Ascending aorta (tissue), 2 donors: ENCODE measurements at regions of chr11 and their contacts with region 1.

Region 1: DNA sequence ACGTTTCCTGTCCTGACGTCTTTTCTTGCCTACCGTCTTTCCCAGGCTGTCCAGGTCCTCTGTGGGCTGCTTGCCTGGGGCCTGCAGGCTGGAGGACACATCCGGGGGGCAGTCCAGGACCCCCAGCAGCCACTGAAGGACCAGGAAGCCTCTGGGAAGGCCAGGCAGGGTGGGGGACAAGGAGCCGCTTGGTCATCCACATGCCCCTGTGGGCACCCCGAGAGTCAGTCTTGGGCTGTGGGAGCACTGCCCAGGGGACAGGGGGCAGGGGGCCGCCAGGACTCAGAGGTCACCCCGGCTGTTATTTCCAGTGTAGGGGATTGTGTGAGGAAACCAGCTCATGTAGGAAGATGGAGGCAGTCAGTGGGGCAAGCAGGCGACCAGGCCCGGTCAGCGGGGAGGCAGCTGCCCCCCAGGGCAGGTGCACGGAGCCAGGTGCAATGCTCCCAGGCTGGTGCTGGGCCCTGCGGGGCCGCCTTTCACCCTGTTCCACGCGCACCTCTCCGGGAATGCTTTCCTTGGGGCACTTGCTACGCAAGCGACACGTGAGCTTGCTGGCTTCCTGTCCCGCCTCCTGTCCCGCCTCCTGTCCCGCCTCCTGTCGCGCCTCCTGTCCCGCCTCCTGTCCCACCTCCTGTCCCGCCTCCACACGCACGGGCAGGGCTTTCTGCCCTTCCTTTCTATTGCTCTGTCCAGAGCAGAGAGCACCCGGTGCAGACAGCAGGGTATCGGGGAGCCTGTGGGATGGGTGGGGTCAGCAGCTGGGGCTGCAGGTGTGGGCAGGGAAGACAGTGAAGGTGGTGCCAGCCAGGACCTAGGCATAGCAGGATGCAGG is 39.5 kb downstream of the MUC5B start:
- DNase-seq: peak; percentile 67 to 94
- H3K4me3 ChIP-seq: peak overlapping the region; percentile 44 to 67
- H3K27ac ChIP-seq: peak overlapping the region; percentile 62 to 83
- H3K4me1 ChIP-seq: peaks cover 6 to 12% of the 10 kb centered on the region in 2 donors
- H3K27me3 ChIP-seq: no peaks in the 10 kb centered on the region
- CTCF ChIP-seq: no peak

Region 2: GRCh38 chr11:1138093-1138492 is 124.3 kb before region 1 on chr11:
- intact Hi-C with region 1: no loop called
- DNase-seq: no peak
- H3K4me3 ChIP-seq: no peak overlapping the region
- H3K27ac ChIP-seq: no peak overlapping the region
- H3K4me1 ChIP-seq: no peaks in the 10 kb centered on the region
- H3K27me3 ChIP-seq: no peaks in the 10 kb centered on the region
- CTCF ChIP-seq: no peak

Region 3: DNA sequence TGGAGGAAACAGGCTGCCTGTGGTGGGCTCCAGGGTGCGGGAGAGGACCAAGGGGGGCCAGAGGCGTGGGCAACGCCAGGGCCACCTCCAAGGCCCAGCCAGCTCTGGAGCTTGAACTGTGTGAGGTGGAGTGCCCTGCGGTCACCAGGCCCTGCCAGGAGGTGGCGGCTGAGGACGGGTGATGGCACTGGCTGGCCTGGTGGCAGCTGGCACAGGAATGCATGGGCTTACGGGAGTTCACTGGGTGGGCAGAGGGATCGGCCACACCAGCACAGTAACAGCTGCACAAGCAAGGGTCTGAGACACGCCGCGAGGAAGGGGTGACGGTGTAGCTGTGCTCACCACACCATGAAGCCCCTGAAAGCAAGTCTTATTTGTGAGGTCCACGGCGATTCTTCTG is 31.2 kb after region 1 on chr11:
- intact Hi-C with region 1: no loop called
- DNase-seq: peak in 1 of 2 donors; percentile 55
- H3K4me3 ChIP-seq: no peak overlapping the region
- H3K27ac ChIP-seq: no peak overlapping the region
- H3K4me1 ChIP-seq: no peaks in the 10 kb centered on the region
- H3K27me3 ChIP-seq: no peaks in the 10 kb centered on the region
- CTCF ChIP-seq: no peak

Region 4: GRCh38 chr11:1303973-1304372 is 41.6 kb after region 1 on chr11:
- intact Hi-C with region 1: loop called (anchors 1 kb)
- DNase-seq: no peak
- H3K4me3 ChIP-seq: peak overlapping the region in 1 of 2 donors; percentile 19
- H3K27ac ChIP-seq: peak overlapping the region in 1 of 2 donors; percentile 46
- H3K4me1 ChIP-seq: peaks cover 15 to 24% of the 10 kb centered on the region in 2 donors
- H3K27me3 ChIP-seq: no peaks in the 10 kb centered on the region
- CTCF ChIP-seq: no peak

Region 5: DNA sequence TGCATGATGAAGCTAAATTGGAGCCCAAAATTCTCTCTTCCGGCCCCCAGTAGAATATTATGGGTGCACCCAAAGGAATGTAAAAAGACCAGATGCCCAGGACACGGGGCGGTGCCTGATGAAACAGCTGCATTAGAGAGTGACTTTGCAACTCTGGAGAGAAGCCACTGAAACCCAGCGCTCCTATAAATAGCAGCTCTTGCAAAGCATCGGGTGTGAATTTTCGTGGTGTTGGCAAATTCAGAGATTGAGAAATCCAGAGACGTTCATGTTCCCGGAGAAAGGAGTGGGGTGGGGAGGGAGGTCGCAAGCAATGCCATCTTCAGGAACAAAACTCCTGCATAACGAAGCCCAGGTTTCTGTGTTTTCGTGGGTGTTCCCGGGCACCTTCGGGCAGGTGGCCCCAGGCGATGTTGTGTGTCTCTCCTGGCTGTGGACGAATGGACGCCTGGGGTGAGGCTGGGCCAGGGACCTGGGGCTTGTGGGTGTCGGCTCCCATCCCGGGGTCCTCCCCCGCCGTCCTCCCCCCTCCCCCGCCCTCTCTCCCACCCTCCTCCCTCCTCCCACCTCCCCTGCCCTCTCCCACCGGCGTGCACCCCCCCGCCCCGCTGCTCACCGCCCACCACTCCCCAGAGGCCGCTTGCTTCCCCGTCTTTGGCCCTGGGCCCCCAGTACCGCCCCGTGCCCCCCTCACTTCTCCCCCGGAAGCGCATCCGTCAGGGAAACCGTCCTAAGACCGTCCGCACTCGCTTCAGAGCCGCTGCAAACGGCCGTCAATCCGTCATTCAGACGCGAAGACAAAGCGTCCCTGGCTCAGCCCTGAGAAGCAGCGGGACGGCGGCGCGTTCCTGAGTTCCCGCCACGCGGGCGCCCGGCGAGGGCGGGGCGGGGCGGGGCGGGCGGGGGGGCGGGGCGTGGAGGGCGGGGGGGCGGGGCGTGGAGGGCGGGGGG is 73.7 kb after region 1 on chr11:
- intact Hi-C with region 1: loop called (anchors 2 kb)
- DNase-seq: peak; percentile 59 to 93
- H3K4me3 ChIP-seq: peak overlapping the region; percentile 61 to 66
- H3K27ac ChIP-seq: peak overlapping the region; percentile 87
- H3K4me1 ChIP-seq: peaks cover 5 to 8% of the 10 kb centered on the region in 2 donors
- H3K27me3 ChIP-seq: no peaks in the 10 kb centered on the region
- CTCF ChIP-seq: no peak

Region 6: GRCh38 chr11:1389103-1389931 is 126.9 kb after region 1 on chr11:
- intact Hi-C with region 1: loop called (anchors 5 kb)
- DNase-seq: peak; percentile 81 to 98
- H3K4me3 ChIP-seq: peak overlapping the region; percentile 59 to 66
- H3K27ac ChIP-seq: peak overlapping the region; percentile 37 to 50
- H3K4me1 ChIP-seq: peaks cover 4 to 11% of the 10 kb centered on the region in 2 donors
- H3K27me3 ChIP-seq: peaks cover 24% of the 10 kb centered on the region
- CTCF ChIP-seq: peak in 2 of 3 experiments; percentile 10 to 33

Region 7: GRCh38 chr11:1482581-1483444 is 220.4 kb after region 1 on chr11:
- intact Hi-C with region 1: loop called (anchors 2 kb)
- DNase-seq: peak; percentile 30 to 83
- H3K4me3 ChIP-seq: peak overlapping the region in 1 of 2 donors; percentile 62
- H3K27ac ChIP-seq: peak overlapping the region; percentile 87 to 98
- H3K4me1 ChIP-seq: peaks cover 50 to 83% of the 10 kb centered on the region in 2 donors
- H3K27me3 ChIP-seq: no peaks in the 10 kb centered on the region
- CTCF ChIP-seq: peak; percentile 22 to 46 (median 31)